Prostate gland (tissue), 2 donors: ENCODE measurements at regions of chr13 and their contacts with region 1.

Region 1: DNA sequence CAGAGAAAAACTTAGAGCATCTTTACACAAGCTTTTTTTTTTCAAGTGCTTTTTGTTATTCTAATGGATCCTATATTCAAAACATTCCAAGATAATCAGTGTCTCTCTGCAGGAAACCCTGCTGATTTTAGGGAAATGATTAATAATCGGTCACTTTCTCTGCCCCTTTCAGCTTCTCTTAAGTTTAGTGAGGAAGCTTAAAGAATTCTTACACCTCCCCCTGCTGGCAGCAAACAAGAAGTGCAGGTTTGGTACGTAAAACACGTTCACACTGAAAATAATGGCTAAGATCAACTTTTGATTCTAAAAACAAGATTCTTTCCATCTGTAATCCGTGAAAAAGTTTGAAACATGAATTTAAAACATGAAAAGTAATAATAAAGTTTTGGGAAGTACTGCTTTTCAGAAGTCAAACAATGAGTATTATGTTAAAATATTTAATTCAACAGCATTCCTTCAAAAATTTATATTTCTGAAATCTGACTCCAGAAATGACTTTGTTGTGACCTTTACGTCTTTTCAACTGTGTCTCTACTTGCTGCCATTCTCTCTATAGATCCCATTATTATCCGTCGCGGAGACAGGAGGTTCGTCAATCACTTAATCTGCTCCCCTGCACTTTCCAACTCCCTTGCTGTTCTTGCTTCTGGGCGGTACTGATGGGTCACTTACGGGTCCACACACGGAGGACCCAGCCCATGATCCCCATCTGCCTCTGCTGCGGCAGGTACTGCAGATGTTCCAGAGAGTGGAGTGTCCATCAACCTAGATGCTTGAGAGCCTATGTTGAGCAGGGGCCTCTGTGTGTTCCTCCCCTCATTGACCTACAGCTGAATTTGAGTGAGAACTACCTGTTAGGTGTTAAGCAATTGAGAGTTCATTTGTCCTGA is 203.1 kb upstream of the EDNRB start:
- DNase-seq: peak; percentile 35
- H3K4me3 ChIP-seq: no peak overlapping the region
- H3K27ac ChIP-seq: no peak overlapping the region
- H3K4me1 ChIP-seq: no peaks in the 10 kb centered on the region
- H3K27me3 ChIP-seq: peaks cover 4% of the 10 kb centered on the region
- CTCF ChIP-seq: peak; percentile 77 to 87 (median 82)
- POLR2A ChIP-seq: no peak

Region 2: DNA sequence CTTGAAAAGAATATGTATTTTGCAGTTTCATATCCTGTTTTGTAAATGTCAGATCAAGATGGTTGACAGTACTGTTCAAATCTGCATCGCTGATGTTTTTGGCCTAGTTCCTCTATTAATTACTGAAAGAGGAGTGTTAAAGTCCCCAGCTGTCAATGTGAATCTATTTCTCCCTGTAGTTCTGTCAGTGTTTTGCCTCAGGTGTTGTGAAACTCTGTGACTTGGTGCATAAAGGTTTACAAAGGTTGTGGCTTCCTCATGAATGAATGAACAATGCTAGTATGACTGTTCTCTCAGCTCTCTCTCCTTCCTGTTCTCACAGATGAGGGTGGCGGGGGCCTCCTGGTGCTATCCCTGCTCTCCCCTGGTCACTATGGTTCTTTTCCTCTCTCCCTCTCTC is 937.2 kb before region 1 on chr13:
- intact Hi-C with region 1: no loop called
- DNase-seq: no peak
- H3K4me3 ChIP-seq: no peak overlapping the region
- H3K27ac ChIP-seq: no peak overlapping the region
- H3K4me1 ChIP-seq: no peaks in the 10 kb centered on the region
- H3K27me3 ChIP-seq: no peaks in the 10 kb centered on the region
- CTCF ChIP-seq: no peak
- POLR2A ChIP-seq: no peak

Region 3: GRCh38 chr13:77779552-77780272 is 342.0 kb before region 1 on chr13:
- intact Hi-C with region 1: loop called (anchors 2 kb)
- DNase-seq: peak; percentile 54
- H3K4me3 ChIP-seq: no peak overlapping the region
- H3K27ac ChIP-seq: no peak overlapping the region
- H3K4me1 ChIP-seq: no peaks in the 10 kb centered on the region
- H3K27me3 ChIP-seq: no peaks in the 10 kb centered on the region
- CTCF ChIP-seq: peak; percentile 25 to 79 (median 70)
- POLR2A ChIP-seq: no peak

Region 4: GRCh38 chr13:77928909-77929308 is 192.8 kb before region 1 on chr13:
- intact Hi-C with region 1: loop called (anchors 10 kb)
- DNase-seq: no peak
- H3K4me3 ChIP-seq: no peak overlapping the region
- H3K27ac ChIP-seq: no peak overlapping the region
- H3K4me1 ChIP-seq: no peaks in the 10 kb centered on the region
- H3K27me3 ChIP-seq: no peaks in the 10 kb centered on the region
- CTCF ChIP-seq: no peak
- POLR2A ChIP-seq: no peak

Region 5: GRCh38 chr13:78067290-78067689 is 54.4 kb before region 1 on chr13:
- intact Hi-C with region 1: no loop called
- DNase-seq: no peak
- H3K4me3 ChIP-seq: no peak overlapping the region
- H3K27ac ChIP-seq: no peak overlapping the region
- H3K4me1 ChIP-seq: no peaks in the 10 kb centered on the region
- H3K27me3 ChIP-seq: peaks cover 2% of the 10 kb centered on the region
- CTCF ChIP-seq: no peak
- POLR2A ChIP-seq: no peak

Region 6: DNA sequence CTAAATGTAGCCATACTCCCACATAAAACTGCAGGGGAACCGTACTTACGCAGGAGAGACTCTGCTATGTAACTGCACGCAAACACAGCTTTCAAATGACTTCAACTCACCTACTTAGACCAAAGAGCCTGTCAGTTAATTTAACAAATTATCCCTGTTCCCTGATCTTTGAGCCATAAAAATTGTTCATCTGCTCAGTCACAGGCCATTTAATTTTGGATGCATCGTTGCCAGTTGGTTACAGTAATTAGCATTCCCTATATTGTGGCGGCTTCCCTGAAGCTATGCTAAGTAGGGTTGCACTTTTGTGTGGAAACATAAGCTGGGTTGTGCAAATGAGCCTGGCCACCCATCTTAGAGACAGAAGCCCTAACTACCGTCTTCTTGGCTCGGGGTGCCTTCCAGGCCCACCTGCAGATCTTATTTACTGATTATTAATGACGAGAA is 558.4 kb after region 1 on chr13:
- intact Hi-C with region 1: no loop called
- DNase-seq: no peak
- H3K4me3 ChIP-seq: no peak overlapping the region
- H3K27ac ChIP-seq: no peak overlapping the region
- H3K4me1 ChIP-seq: no peaks in the 10 kb centered on the region
- H3K27me3 ChIP-seq: no peaks in the 10 kb centered on the region
- CTCF ChIP-seq: no peak
- POLR2A ChIP-seq: no peak